Prostate gland (tissue), 2 donors: ENCODE measurements at regions of chr6 and their contacts with region 1.

Region 1: DNA sequence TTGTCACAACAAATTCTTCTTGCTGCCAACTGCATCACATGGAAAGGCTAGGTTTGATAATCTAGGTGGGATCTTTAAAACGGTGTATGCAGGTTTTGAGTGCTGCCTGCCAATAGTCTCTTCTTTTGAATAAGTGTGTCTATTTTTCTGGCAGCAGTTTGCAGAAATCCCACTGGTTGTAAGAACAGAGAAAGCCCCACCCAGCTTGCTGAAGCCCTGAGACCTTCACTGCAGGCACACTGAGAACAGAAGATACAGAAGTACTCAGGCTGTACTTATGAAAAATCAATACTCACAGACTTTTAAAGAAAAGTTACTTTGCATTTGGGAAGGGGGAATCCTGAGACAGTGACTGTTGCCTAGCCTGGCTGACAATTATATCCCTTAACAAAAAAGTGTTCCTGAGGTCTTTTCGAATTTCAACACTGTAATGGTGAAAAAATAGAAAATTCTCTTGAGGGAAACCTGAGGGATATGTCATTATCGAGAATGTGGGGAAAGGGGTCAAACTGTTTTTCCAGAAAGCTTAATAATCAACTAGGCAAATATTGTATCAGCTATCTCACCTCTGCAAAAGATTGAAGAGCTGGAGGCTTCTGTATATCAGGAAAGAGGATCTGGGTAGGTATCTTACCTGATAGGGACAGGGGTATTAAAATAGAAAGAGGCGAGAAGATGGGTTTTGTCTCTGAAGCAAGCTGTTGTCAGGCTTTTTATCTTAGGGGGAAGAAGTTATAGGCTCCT is 199.9 kb downstream of the LRFN2 start:
- DNase-seq: no peak
- H3K4me3 ChIP-seq: no peak overlapping the region
- H3K27ac ChIP-seq: no peak overlapping the region
- H3K4me1 ChIP-seq: no peaks in the 10 kb centered on the region
- H3K27me3 ChIP-seq: no peaks in the 10 kb centered on the region
- CTCF ChIP-seq: no peak
- POLR2A ChIP-seq: no peak

Region 2: DNA sequence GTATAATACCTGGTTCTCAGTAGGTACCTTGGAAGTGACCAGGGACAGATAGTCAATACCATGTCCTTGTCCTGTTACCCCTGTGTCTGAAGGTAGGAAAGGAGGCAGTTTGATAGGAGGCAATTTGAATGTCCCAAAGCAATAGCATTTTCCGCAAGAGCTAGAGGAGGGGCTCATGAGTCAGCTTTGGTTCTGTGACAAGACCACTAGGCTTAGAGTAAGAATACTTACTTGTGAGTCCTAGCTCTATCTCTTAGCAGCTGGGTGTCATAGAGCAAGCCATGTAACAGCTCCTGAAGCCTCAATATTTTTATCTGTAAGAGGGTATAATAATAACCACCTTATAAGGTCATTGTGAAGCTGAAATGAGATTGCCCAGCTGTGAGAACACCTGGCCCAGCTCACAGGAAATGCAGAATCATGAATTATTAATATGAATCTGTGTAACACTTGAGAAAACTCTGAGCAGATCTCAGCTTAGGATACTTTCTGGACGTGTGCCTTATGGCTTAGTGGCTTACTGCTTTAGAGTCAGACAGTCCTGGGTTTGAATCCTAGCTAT is 536.5 kb before region 1 on chr6:
- intact Hi-C with region 1: loop called (anchors 10 kb)
- DNase-seq: no peak
- H3K4me3 ChIP-seq: no peak overlapping the region
- H3K27ac ChIP-seq: no peak overlapping the region
- H3K4me1 ChIP-seq: no peaks in the 10 kb centered on the region
- H3K27me3 ChIP-seq: no peaks in the 10 kb centered on the region
- CTCF ChIP-seq: no peak
- POLR2A ChIP-seq: no peak

Region 3: DNA sequence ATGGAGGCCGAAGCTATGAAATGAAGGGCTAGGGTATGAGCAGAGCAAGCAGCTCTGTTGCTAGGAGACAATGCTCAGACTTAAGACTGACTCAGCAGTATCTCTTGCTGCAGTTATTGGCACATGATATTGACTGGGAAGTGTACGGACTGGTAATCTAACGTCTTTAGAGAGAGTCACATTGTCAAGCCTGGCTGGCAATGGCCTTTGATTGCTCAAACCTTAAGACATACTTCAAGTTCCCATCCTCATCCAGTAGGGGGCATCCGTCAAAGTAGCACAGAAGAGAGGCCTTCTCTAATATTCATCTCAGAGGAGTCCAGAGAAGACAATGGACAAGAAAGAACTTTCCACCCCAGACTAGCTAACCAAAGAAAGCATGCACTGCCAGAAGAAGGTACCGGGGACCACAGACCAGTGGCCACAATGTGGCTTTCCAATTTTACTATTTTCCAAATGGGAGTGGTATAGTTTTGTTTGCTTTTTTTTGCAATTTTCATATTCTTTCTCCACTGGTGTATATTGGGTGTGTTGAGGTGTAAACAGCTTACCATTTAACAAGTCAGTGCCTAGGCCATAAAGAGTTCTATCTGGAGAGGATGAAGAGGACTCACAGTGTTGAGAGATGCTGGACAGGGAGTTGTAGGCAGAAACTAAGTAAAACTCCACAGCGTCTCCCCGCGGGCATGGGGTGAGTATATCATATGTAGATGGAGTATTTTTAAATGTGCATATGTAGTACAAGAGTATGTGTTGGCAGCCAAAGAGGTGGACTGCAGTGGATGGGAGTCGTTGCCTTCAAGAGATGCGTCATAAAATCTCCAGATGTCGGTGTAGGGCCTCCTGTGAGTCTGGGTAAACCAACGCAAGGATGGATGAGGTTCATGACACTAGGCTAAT is 163.2 kb after region 1 on chr6:
- intact Hi-C with region 1: no loop called
- DNase-seq: peak; percentile 8
- H3K4me3 ChIP-seq: no peak overlapping the region
- H3K27ac ChIP-seq: no peak overlapping the region
- H3K4me1 ChIP-seq: no peaks in the 10 kb centered on the region
- H3K27me3 ChIP-seq: no peaks in the 10 kb centered on the region
- CTCF ChIP-seq: peak in 3 of 4 experiments; percentile 20 to 39 (median 28)
- POLR2A ChIP-seq: no peak

Region 4: DNA sequence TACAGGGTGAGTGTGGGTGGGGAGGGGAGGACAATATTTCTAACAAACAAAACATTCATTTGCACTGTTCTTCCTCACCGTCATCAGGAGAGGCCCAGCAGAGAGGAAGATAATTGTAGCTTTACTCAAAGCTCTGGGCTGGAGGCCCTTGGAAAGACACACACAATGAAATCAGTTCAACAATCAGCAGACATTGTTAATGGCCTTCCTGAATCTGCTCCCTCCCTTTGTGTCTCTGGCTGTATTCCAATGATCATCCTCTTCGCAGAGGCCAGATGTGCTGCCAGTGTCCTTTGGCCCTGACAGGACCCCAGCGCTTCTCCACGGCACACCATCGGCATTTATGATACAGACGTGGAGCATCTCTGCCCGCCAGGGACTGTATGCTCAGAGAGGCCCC is 244.4 kb after region 1 on chr6:
- intact Hi-C with region 1: no loop called
- DNase-seq: no peak
- H3K4me3 ChIP-seq: no peak overlapping the region
- H3K27ac ChIP-seq: no peak overlapping the region
- H3K4me1 ChIP-seq: no peaks in the 10 kb centered on the region
- H3K27me3 ChIP-seq: no peaks in the 10 kb centered on the region
- CTCF ChIP-seq: no peak
- POLR2A ChIP-seq: no peak